Stomach (tissue), 19 donors: ENCODE measurements at regions of chr5 and their contacts with region 1.

Region 1: DNA sequence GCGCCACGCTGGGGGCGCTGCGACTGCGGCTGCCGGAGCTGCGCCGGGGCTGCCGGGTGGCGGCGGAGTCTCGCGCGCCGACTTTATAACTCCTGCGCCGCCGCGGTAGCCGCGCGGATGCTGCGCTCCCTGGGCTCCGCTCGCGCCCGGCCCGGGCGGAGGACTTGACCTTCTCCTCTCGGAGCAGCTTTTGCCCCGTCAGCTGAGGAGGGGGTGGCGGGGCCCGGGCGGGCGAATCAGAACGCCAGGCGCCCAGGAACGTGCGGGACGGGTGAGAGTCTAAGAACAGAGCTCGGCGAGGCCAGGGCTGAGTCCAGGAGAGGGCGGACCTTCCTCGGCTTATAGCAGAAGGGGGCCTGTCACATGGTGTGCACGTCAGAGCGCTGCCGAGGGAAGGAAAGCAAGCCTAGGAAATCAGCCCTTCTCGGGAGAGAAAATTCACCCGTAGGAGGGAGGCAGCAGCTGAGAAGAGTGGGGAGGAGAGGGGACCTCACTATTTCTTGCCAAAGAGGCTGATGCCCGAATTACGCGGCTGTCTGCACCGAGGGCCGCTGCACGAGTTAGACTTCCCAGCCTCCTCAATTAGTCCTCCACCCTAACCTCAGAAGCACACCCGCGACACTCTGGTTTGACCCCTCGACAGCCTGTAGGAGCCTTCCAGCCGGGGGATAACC is at the start of gene FOXD1:
- DNase-seq: peak; percentile 45 to 90
- H3K4me3 ChIP-seq: peak within 1 kb of the TSS; percentile 33 to 61 (median 48)
- H3K27ac ChIP-seq: no peak within 1 kb of the TSS
- H3K4me1 ChIP-seq: peaks cover 23 to 42% (median 31%) of the 10 kb centered on the region in 4 donors
- H3K27me3 ChIP-seq: peaks cover 53 to 98% (median 93%) of the 10 kb centered on the region in 3 donors
- CTCF ChIP-seq: no peak
- EP300 ChIP-seq: no peak
- POLR2A ChIP-seq: no peak
- total RNA-seq, gene FOXD1: 0.18 TPM in 1 of 5 donors, not detected in the others

Region 2: GRCh38 chr5:72288924-72289323 is 1159.7 kb before region 1 on chr5:
- intact Hi-C with region 1: no loop called
- DNase-seq: peak in 1 of 2 donors; percentile 20
- H3K4me3 ChIP-seq: no peak overlapping the region
- H3K27ac ChIP-seq: no peak overlapping the region
- H3K4me1 ChIP-seq: peaks cover 0 to 19% (median 6%) of the 10 kb centered on the region in 4 donors
- H3K27me3 ChIP-seq: no peaks in the 10 kb centered on the region
- CTCF ChIP-seq: no peak
- EP300 ChIP-seq: no peak
- POLR2A ChIP-seq: no peak

Region 3: GRCh38 chr5:73215891-73216610 is 232.5 kb before region 1 on chr5:
- intact Hi-C with region 1: loop called (anchors 10 kb)
- DNase-seq: peak; percentile 83 to 94
- H3K4me3 ChIP-seq: peak overlapping the region; percentile 33 to 54 (median 38)
- H3K27ac ChIP-seq: peak overlapping the region in 1 of 5 donors; percentile 32
- H3K4me1 ChIP-seq: peaks cover 4 to 17% (median 14%) of the 10 kb centered on the region in 4 donors
- H3K27me3 ChIP-seq: peaks cover 0 to 99% (median 51%) of the 10 kb centered on the region in 3 donors
- CTCF ChIP-seq: peak in 5 of 7 experiments; percentile 76 to 89 (median 84)
- EP300 ChIP-seq: no peak
- POLR2A ChIP-seq: no peak

Region 4: GRCh38 chr5:73370640-73371583 is 77.7 kb before region 1 on chr5:
- intact Hi-C with region 1: no loop called
- DNase-seq: no peak
- H3K4me3 ChIP-seq: no peak overlapping the region
- H3K27ac ChIP-seq: no peak overlapping the region
- H3K4me1 ChIP-seq: peaks cover 0 to 10% (median 4%) of the 10 kb centered on the region in 4 donors
- H3K27me3 ChIP-seq: peaks cover 0 to 46% (median 3%) of the 10 kb centered on the region in 3 donors
- CTCF ChIP-seq: no peak
- EP300 ChIP-seq: no peak
- POLR2A ChIP-seq: no peak

Region 5: DNA sequence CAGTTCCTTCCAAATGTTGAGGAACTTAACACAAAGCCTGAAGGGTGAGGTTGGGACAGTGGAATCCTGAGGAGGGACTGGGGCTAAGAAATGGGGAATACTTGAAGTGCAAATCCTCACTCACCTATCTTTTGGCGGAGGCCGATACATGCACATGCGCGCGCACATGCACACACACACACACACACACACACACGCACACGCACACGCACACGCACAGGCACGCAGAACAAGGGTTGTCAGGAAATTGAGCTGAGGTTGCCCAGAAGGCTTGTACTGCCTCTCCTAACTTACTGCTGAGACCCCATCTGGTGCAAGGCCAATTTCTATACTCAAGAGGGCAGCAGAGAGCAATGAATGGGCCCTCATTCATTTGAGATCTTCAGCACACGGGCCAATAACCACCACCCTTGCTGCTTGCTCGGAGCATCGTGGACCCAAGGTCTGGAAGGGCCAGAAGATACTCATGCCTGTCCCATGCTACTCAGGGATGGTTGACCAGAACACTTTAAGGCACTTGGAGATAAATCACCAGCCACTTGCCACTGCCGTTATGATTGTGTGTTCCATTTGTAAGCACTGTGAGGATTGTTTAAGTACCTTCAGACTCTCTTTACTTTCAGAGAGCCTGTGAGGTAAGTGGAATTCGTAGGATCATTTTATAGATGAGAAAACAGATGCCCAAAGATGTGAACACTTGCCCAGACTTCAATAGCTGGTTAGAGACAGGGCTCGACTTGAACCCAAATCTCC is 71.1 kb after region 1 on chr5:
- intact Hi-C with region 1: no loop called
- DNase-seq: peak; percentile 74 to 91
- H3K4me3 ChIP-seq: no peak overlapping the region
- H3K27ac ChIP-seq: no peak overlapping the region
- H3K4me1 ChIP-seq: peaks cover 12 to 41% (median 18%) of the 10 kb centered on the region in 4 donors
- H3K27me3 ChIP-seq: no peaks in the 10 kb centered on the region
- CTCF ChIP-seq: peak in 5 of 7 experiments; percentile 44 to 88 (median 67)
- EP300 ChIP-seq: no peak
- POLR2A ChIP-seq: no peak

Region 6: DNA sequence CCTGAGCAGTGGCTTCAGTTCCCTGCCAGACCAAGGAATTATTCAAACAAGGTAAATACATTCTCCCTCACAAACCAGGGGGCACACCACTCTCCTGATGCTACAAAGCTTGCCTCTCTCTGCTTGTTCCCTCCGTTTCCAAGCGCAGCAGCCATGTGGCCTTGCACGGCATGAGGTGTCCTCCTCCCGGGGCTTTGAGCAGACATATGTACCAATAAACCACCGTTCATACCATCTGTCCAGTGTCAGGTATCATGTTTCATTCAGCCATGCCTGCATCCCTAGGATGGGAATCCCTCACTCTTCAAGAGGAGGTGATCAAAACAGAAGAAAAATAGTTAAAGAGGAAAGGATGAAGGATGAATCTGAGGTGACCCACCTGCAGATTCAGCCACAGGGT is 909.2 kb after region 1 on chr5:
- intact Hi-C with region 1: no loop called
- DNase-seq: peak in 1 of 2 donors; percentile 34
- H3K4me3 ChIP-seq: no peak overlapping the region
- H3K27ac ChIP-seq: no peak overlapping the region
- H3K4me1 ChIP-seq: peaks cover 0 to 14% (median 1%) of the 10 kb centered on the region in 4 donors
- H3K27me3 ChIP-seq: no peaks in the 10 kb centered on the region
- CTCF ChIP-seq: no peak
- EP300 ChIP-seq: no peak
- POLR2A ChIP-seq: no peak